ENCODE measurements at regions of chr5 and their contacts with region 1.

Region 1: DNA sequence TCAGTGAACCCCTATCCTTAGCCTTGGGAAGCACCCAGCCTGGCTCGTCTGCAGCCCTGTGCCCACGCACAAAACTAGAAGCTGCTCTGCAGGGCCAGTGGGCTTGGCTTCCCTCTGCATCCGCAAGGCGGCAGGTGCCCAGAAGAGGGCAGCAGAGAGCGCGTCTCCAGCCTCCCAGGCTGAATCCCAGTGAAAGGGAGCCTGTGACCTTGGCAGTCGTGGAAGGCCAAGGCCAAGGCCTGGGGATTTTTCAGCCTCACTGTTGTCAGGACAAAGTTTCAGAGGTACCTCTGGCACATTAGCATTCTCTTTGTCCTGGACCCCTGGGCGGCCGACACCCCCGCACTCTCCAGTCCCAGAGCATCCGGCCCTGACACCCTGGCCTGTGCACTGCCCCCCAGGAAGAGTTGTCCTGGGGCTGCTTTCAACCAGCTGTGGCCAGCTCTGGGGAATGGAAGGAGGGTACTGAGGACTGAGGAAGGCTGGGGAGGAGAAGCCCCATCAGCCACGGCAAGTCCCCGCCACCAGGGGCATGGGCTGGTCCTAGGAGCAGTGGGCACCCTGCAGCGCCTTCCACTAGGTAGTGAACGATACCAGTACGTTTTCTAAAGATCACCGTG is 63.6 kb upstream of the IL17B start:
- DNase-seq: peak; percentile 76
- ATAC-seq: peak; percentile 82
- H3K4me3 Mint-ChIP-seq: no peak overlapping the region
- H3K27ac Mint-ChIP-seq: no peak overlapping the region
- H3K4me1 Mint-ChIP-seq: peaks cover 9% of the 10 kb centered on the region
- H3K27me3 Mint-ChIP-seq: no peaks in the 10 kb centered on the region

Region 2: GRCh38 chr5:149561848-149562247 is 119.2 kb after region 1 on chr5:
- CTCF ChIA-PET with region 1: interaction called, 39 read pairs
- POLR2A ChIA-PET with region 1: no interaction called
- DNase-seq: no peak
- ATAC-seq: no peak
- H3K4me3 Mint-ChIP-seq: no peak overlapping the region
- H3K27ac Mint-ChIP-seq: no peak overlapping the region
- H3K4me1 Mint-ChIP-seq: peaks cover 11% of the 10 kb centered on the region
- H3K27me3 Mint-ChIP-seq: no peaks in the 10 kb centered on the region

Region 3: GRCh38 chr5:149567226-149567625 is 124.6 kb after region 1 on chr5:
- CTCF ChIA-PET with region 1: interaction called, 39 read pairs
- POLR2A ChIA-PET with region 1: no interaction called
- DNase-seq: no peak
- ATAC-seq: no peak
- H3K4me3 Mint-ChIP-seq: no peak overlapping the region
- H3K27ac Mint-ChIP-seq: no peak overlapping the region
- H3K4me1 Mint-ChIP-seq: peaks cover 7% of the 10 kb centered on the region
- H3K27me3 Mint-ChIP-seq: no peaks in the 10 kb centered on the region

Region 4: DNA sequence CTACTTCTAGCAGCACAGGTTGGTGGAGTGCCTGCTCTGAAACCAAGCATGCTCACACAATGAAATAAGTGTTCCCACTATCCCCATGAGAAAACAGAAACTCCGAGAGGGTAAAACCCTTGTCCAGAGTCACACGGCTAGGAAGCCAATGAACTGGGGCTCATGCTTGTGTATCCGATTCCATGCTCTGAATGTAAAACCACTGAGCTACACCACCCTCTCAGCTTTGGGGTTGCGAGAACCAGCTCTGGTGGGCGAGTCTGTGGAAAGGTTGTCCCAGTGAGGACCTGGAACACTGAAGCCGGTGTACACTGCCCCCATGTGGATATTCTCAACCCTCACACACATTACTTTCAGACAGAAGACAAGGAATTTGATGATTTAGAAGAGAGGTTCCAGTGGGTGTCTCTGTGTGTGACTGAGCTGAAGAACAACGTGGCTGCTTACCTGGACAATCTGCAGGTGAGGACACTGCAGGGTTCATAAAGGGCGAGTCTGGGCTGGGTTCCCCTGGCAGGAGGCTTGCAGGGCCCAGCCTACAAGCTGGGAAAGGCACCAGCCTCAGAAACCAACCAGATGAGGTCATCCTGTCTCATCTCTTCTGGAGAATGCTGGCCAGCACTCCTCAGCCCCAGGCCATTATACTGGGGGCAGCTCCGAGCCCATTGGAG is 176.0 kb after region 1 on chr5:
- CTCF ChIA-PET with region 1: interaction called, 13 read pairs
- POLR2A ChIA-PET with region 1: no interaction called
- DNase-seq: peak; percentile 39
- ATAC-seq: peak; percentile 63
- H3K4me3 Mint-ChIP-seq: no peak overlapping the region
- H3K27ac Mint-ChIP-seq: no peak overlapping the region
- H3K4me1 Mint-ChIP-seq: peaks cover 11% of the 10 kb centered on the region
- H3K27me3 Mint-ChIP-seq: no peaks in the 10 kb centered on the region

Measured in activated CD8-positive, alpha-beta T cell treated with anti-CD3 and anti-CD28 coated beads, Interleukin-2, amount 10 ng/mL, durations not matched to agents 7 days and 5 days (primary cell).